K562 (cell line): ENCODE measurements at regions of chr16 and their contacts with region 1.

Region 1: GRCh38 chr16:25235991-25236390 is 19.2 kb downstream of the AQP8 start:
- DNase-seq: no peak
- ATAC-seq: no peak
- H3K4me3 ChIP-seq: no peak overlapping the region
- H3K27ac ChIP-seq: no peak overlapping the region
- H3K4me1 ChIP-seq: no peaks in the 10 kb centered on the region; a peak in 1 of 5 replicates
- H3K27me3 ChIP-seq: no peaks in the 10 kb centered on the region
- CTCF ChIP-seq: no peak
- EP300 ChIP-seq: no peak
- POLR2A ChIP-seq: no peak
- RAD21 ChIP-seq: no peak

Region 2: DNA sequence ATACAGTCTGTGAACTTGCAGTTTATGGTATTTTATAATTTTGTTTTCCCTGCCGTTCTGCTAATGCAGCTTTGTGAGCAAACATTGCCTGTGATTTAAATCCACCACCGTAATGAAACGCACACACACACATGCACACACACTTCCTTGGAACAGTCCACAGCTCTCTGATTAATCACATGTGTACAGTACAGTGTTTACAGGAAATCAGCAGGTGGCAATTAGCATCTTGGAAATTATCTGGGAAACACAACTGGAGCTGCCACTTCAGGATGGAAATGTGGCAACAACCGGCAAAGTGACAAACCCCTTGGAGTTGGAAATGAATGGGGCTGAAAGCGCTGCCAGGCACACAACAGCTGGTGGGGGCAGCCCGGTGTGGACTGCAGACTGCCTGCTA is 34.6 kb after region 1 on chr16:
- CTCF ChIA-PET with region 1: no interaction called
- POLR2A ChIA-PET with region 1: no interaction called
- in situ Hi-C with region 1: no loop called
- intact Hi-C with region 1: loop called (anchors 5 kb)
- DNase-seq: no peak
- ATAC-seq: no peak
- H3K4me3 ChIP-seq: no peak overlapping the region
- H3K27ac ChIP-seq: no peak overlapping the region
- H3K4me1 ChIP-seq: peaks cover 13 to 17% of the 10 kb centered on the region in 2 experiments; a peak in 4 of 5 replicates
- H3K27me3 ChIP-seq: no peaks in the 10 kb centered on the region
- CTCF ChIP-seq: no peak
- EP300 ChIP-seq: no peak
- POLR2A ChIP-seq: no peak
- RAD21 ChIP-seq: no peak

Region 3: GRCh38 chr16:25372716-25373115 is 136.7 kb after region 1 on chr16:
- CTCF ChIA-PET with region 1: interaction called, 6 read pairs
- POLR2A ChIA-PET with region 1: no interaction called
- in situ Hi-C with region 1: no loop called
- intact Hi-C with region 1: loop called (anchors 5 kb)
- DNase-seq: peak in 1 of 4 experiments; percentile 9
- ATAC-seq: peak; percentile 55; the same call in 2 of the 3 replicates
- H3K4me3 ChIP-seq: no peak overlapping the region
- H3K27ac ChIP-seq: no peak overlapping the region
- H3K4me1 ChIP-seq: no peaks in the 10 kb centered on the region
- H3K27me3 ChIP-seq: no peaks in the 10 kb centered on the region
- CTCF ChIP-seq: peak; percentile 49 to 79 (median 61)
- EP300 ChIP-seq: no peak
- POLR2A ChIP-seq: no peak
- RAD21 ChIP-seq: peak; percentile 35 to 65